ENCODE measurements at regions of chr1 and their contacts with region 1.

Region 1: DNA sequence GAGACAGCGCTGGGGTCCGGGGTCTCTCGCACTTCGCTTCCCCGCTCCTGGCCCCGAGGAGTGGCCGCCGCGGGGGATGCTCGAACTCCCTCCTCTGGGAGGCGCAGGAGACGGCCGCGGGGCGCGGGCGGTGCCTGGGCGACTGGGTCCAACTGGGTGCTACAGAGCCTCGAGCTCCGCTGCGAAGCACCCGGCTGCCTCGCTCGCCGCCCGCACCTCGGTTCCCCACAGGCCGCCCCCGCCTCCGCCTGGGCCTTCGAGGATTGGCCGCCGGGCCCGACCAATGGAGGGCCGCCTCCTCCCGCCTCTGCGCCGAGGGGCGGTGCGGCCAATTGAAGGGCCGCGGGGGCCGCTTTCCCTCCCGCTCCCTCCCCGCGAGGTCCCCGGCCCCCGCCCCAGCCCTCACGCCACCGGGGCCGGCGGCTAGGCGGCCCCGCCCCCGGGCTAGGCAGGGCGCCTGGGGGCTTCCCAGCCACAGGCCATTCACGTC is at the start of gene CNN3:
- DNase-seq: peak; percentile 82
- ATAC-seq: peak; percentile 92
- H3K4me3 ChIP-seq: peak within 1 kb of the TSS; percentile 79 to 81 (median 81)
- H3K27ac ChIP-seq: peak within 1 kb of the TSS; percentile 95
- H3K4me1 ChIP-seq: peaks cover 64% of the 10 kb centered on the region
- H3K27me3 ChIP-seq: no peaks in the 10 kb centered on the region; a peak in 1 of 5 replicates
- CTCF ChIP-seq: peak; percentile 39
- EP300 ChIP-seq: no peak; a peak in 1 of 4 replicates
- POLR2A ChIP-seq: peak; percentile 92 to 97
- RAD21 ChIP-seq: peak; percentile 40
- total RNA-seq, gene CNN3: 223 and 290 TPM in 2 replicates

Region 2: DNA sequence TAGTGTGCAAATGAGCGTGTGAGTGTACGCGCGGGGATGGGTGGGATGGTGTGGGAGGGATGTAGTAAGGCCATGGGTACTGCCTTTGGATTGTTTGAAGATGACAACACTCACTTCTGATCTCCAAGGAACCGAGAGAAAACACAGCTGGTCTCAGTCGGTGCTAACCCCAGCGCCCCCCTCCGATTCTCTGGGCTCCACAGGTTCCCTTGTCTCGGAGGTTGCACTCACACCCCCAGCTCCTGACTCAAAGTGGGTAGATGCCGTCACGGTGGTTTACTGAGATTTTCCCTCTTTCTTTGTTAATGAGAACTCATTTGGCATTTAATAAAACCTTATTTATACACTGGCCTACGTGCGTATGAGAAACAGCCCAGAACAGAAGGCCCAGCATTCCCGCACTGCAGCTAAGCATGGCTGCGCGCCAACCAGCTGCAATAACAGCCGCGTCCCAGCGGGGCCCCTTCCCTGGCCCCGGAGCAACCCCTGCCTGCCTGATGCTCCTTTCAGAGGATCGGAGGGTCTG is 831.8 kb before region 1 on chr1:
- CTCF ChIA-PET with region 1: no interaction called
- POLR2A ChIA-PET with region 1: no interaction called
- in situ Hi-C with region 1: no loop called
- intact Hi-C with region 1: no loop called
- DNase-seq: no peak
- ATAC-seq: no peak
- H3K4me3 ChIP-seq: no peak overlapping the region
- H3K27ac ChIP-seq: no peak overlapping the region
- H3K4me1 ChIP-seq: peaks cover 70% of the 10 kb centered on the region
- H3K27me3 ChIP-seq: peaks cover 0 to 7% of the 10 kb centered on the region in 2 experiments; a peak in 2 of 5 replicates
- CTCF ChIP-seq: no peak
- EP300 ChIP-seq: no peak
- POLR2A ChIP-seq: no peak
- RAD21 ChIP-seq: no peak

Region 3: DNA sequence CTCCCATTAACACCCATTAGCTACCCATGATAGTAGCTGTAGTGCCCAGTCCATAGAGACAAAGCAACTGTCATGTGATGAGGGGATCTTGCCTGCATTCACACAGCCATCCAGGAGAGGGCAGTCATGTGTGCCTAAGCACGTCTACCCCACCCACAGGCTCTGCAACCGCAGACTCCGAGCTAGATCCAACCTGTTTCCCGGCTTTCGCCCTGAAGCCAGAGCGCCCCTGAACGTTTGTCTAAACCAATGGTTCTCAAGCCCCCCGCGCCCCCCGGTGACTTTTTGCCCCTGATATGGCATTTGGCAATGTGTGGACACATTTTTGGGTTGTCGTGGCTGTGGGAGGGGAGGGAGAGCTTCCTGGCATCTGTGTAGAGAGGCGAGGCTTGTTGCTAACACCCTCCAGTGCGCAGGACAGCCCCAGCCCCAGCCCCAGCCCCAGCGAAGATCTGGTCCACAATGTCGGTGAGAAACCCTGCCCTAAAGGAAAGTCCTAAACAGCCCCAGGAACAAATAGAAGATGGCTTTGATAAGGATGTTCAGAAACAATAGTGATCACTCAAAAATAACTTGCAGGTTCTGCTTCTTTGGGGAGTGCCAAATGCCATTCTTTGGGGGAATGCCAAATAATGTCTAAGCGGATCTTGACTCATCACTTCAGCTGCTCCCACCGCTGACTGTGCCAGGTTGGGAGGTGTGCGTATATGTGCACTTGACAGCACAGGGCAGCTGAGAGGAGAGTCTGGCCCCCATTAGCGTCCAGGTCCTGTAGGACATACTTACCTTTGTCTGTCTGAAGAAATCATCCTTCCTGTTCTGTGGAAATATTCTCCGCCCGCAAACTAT is 72.3 kb before region 1 on chr1:
- CTCF ChIA-PET with region 1: interaction called, 3 read pairs
- POLR2A ChIA-PET with region 1: interaction called, 4 read pairs
- in situ Hi-C with region 1: no loop called
- intact Hi-C with region 1: loop called (anchors 1 kb)
- DNase-seq: peak; percentile 74
- ATAC-seq: peak; percentile 99
- H3K4me3 ChIP-seq: peak overlapping the region in 1 of 3 experiments; percentile 60; a peak in 1 of 6 replicates
- H3K27ac ChIP-seq: no peak overlapping the region
- H3K4me1 ChIP-seq: peaks cover 15% of the 10 kb centered on the region
- H3K27me3 ChIP-seq: no peaks in the 10 kb centered on the region
- CTCF ChIP-seq: peak; percentile 98
- EP300 ChIP-seq: no peak
- POLR2A ChIP-seq: no peak
- RAD21 ChIP-seq: peak; percentile 95

Region 4: DNA sequence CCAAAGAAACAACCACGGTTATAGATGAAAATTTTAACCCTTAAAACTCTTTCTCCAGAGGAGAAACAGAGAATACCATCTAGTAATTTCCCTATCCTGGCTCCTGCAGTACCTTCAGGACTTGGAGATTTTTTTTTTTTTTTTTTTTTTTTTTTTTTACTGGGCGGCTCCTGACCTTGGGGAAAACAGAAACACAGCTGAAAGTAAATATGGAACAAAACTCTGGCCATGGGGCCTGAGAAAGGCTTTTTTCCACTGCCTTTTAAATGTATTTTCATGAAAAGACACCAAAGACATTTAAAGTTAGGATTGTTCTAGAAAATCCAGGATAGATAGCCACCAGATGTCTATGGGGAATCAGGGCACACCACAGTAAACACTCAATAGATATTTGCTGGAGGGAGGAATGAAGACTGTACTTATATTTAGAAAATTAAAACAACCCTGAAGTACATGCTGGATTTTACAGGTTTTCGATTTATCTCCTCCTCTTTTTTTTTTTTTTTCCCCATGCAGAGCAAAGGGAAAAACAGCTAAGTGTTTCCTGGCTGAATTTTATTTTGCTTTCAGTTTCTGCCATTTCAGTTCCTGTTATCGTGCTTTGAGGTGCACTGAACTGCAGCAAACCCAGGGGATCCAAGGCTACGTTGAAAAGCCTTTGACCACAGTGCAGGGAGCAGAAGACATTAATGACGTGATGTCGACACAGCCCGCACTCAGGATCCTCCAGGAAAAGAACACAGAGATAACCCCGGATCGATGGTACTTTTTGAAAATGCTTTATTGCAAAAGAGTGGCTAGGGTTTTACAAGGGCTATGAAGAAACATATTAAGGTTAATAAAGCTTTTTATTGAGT is 35.7 kb after region 1 on chr1:
- CTCF ChIA-PET with region 1: no interaction called
- POLR2A ChIA-PET with region 1: interaction called, 15 read pairs
- in situ Hi-C with region 1: no loop called
- intact Hi-C with region 1: loop called (anchors 2 kb)
- DNase-seq: peak; percentile 85
- ATAC-seq: peak; percentile 96
- H3K4me3 ChIP-seq: peak overlapping the region; percentile 42 to 57 (median 45); a peak in 4 of 6 replicates
- H3K27ac ChIP-seq: peak overlapping the region; percentile 96
- H3K4me1 ChIP-seq: peaks cover 55% of the 10 kb centered on the region
- H3K27me3 ChIP-seq: no peaks in the 10 kb centered on the region
- CTCF ChIP-seq: no peak
- EP300 ChIP-seq: peak in 1 of 2 experiments; percentile 92; a peak in 2 of 4 replicates
- POLR2A ChIP-seq: peak in 1 of 2 experiments; percentile 47; a peak in 1 of 4 replicates
- RAD21 ChIP-seq: no peak

Region 5: GRCh38 chr1:94983171-94983739 is 56.3 kb after region 1 on chr1:
- CTCF ChIA-PET with region 1: no interaction called
- POLR2A ChIA-PET with region 1: no interaction called
- in situ Hi-C with region 1: no loop called
- intact Hi-C with region 1: no loop called
- DNase-seq: no peak
- ATAC-seq: peak; percentile 49; the same call in 2 of the 3 replicates
- H3K4me3 ChIP-seq: no peak overlapping the region
- H3K27ac ChIP-seq: peak overlapping the region; percentile 20
- H3K4me1 ChIP-seq: peaks cover 63% of the 10 kb centered on the region
- H3K27me3 ChIP-seq: no peaks in the 10 kb centered on the region
- CTCF ChIP-seq: no peak
- EP300 ChIP-seq: no peak
- POLR2A ChIP-seq: no peak
- RAD21 ChIP-seq: no peak

Region 6: GRCh38 chr1:95013950-95014574 is 87.1 kb after region 1 on chr1:
- CTCF ChIA-PET with region 1: no interaction called
- POLR2A ChIA-PET with region 1: interaction called, 3 read pairs
- in situ Hi-C with region 1: no loop called
- intact Hi-C with region 1: loop called (anchors 1 kb)
- DNase-seq: peak; percentile 92
- ATAC-seq: peak; percentile 98
- H3K4me3 ChIP-seq: no peak overlapping the region; a peak in 1 of 6 replicates
- H3K27ac ChIP-seq: peak overlapping the region; percentile 85
- H3K4me1 ChIP-seq: peaks cover 60% of the 10 kb centered on the region
- H3K27me3 ChIP-seq: no peaks in the 10 kb centered on the region
- CTCF ChIP-seq: no peak
- EP300 ChIP-seq: peak in 1 of 2 experiments; percentile 93; a peak in 2 of 4 replicates
- POLR2A ChIP-seq: no peak
- RAD21 ChIP-seq: no peak